Naive thymus-derived CD4-positive, alpha-beta T cell (primary cell): ENCODE measurements at regions of chr1 and their contacts with region 1.

Region 1: GRCh38 chr1:167121375-167122120 is 27.7 kb downstream of the STYXL2 start:
- DNase-seq: peak in 8 of 9 donors; percentile 11 to 59 (median 43)
- ATAC-seq: peak; percentile 75
- H3K4me3 ChIP-seq: peak overlapping the region; percentile 79
- H3K4me3 Mint-ChIP-seq: peak overlapping the region; percentile 81 to 93 (median 88)
- H3K27ac ChIP-seq: no peak overlapping the region
- H3K27ac Mint-ChIP-seq: peak overlapping the region in 8 of 9 donors; percentile 17 to 82 (median 74)
- H3K4me1 ChIP-seq: peaks cover 0 to 8% of the 10 kb centered on the region in 2 donors
- H3K4me1 Mint-ChIP-seq: peaks cover 4 to 10% (median 7%) of the 10 kb centered on the region in 7 donors
- H3K27me3 ChIP-seq: no peaks in the 10 kb centered on the region
- H3K27me3 Mint-ChIP-seq: peaks cover 0 to 12% (median 5%) of the 10 kb centered on the region in 5 donors

Region 2: GRCh38 chr1:166612886-166613285 is 508.7 kb before region 1 on chr1:
- CTCF ChIA-PET with region 1: no interaction called
- POLR2A ChIA-PET with region 1: no interaction called
- intact Hi-C with region 1: no loop called
- DNase-seq: no peak
- ATAC-seq: no peak
- H3K4me3 ChIP-seq: no peak overlapping the region
- H3K4me3 Mint-ChIP-seq: no peak overlapping the region
- H3K27ac ChIP-seq: no peak overlapping the region
- H3K27ac Mint-ChIP-seq: no peak overlapping the region
- H3K4me1 ChIP-seq: no peaks in the 10 kb centered on the region
- H3K4me1 Mint-ChIP-seq: no peaks in the 10 kb centered on the region
- H3K27me3 ChIP-seq: no peaks in the 10 kb centered on the region
- H3K27me3 Mint-ChIP-seq: peaks cover 0 to 14% (median 3%) of the 10 kb centered on the region in 5 donors

Region 3: DNA sequence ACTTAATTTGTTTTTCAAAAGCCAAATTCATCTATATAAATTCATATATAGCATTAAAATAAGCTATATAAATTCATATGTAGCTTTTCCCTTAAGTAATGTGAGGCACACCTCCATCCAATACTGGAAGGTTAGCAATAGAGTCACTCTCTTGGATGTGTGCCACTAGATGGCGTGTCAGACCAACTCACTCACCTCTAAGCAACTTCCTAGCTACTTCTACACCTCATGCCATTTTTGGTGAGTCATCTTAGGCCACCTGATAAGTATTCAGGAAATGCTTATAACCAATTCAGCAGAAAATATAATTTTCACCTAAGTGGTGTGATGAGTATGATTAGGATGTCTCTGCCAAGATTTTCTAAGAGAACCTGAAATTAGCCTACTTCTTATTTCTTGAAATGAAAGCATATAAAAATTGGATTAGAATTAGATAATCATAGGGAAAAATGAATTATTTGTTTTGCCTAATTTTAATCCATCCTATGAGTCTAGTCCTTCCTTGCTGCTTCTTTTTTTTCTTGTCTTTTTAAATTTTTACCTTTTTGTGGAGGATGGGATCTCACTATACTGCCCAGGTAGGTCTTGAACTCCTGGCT is 211.1 kb before region 1 on chr1:
- CTCF ChIA-PET with region 1: interaction called, 20 read pairs
- POLR2A ChIA-PET with region 1: no interaction called
- intact Hi-C with region 1: loop called (anchors 1 to 5 kb)
- DNase-seq: peak; percentile 21 to 80 (median 74)
- ATAC-seq: peak; percentile 99
- H3K4me3 ChIP-seq: no peak overlapping the region
- H3K4me3 Mint-ChIP-seq: no peak overlapping the region
- H3K27ac ChIP-seq: no peak overlapping the region
- H3K27ac Mint-ChIP-seq: peak overlapping the region in 1 of 9 donors; percentile 12
- H3K4me1 ChIP-seq: no peaks in the 10 kb centered on the region
- H3K4me1 Mint-ChIP-seq: peaks cover 0 to 31% (median 4%) of the 10 kb centered on the region in 7 donors
- H3K27me3 ChIP-seq: no peaks in the 10 kb centered on the region
- H3K27me3 Mint-ChIP-seq: peaks cover 0 to 6% (median 0%) of the 10 kb centered on the region in 5 donors

Region 4: DNA sequence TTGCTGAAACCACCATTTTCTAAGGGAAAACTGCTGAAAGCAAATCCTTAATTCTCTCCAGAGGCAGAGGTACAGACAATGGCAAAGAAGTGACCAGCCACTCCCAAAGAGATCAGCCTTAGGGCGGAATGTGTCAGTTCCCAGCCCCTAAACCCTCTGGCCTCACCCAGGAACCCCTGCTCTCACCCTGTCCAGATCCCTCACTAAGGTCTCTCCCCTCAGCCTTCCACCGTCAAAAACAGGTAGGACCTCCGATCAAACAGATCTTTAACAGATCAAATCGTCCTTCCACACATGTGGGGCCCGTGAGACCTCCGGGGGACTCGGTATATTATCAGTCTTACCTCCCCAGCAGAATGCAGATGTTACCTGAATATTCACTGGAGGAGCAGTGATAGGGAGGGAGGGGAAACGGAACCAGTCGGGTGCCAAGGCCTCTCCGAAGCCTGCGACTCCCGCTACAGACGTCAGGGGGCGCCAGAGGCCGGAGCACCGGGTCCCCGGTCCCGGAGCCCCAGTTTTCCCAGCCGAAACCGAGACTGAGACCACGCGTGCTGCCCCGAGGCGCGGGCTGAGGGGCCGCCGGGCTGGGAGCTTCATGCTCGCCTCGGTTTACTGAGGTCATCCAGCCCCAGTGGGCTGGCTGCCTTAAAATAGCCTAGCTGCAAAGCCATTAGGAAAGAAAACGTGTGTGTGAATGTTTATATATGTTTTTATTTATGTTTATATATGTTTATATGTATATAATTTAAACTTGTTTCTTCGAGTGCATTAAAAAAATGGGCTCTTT is 55.0 kb before region 1 on chr1:
- CTCF ChIA-PET with region 1: interaction called, 67 read pairs
- POLR2A ChIA-PET with region 1: interaction called, 5 read pairs
- intact Hi-C with region 1: loop called (anchors 1 kb)
- DNase-seq: peak; percentile 59 to 90 (median 78)
- ATAC-seq: peak; percentile 95
- H3K4me3 ChIP-seq: no peak overlapping the region
- H3K4me3 Mint-ChIP-seq: peak overlapping the region in 4 of 10 donors; percentile 15 to 54 (median 37)
- H3K27ac ChIP-seq: no peak overlapping the region
- H3K27ac Mint-ChIP-seq: peak overlapping the region in 1 of 9 donors; percentile 58
- H3K4me1 ChIP-seq: no peaks in the 10 kb centered on the region
- H3K4me1 Mint-ChIP-seq: peaks cover 0 to 9% (median 5%) of the 10 kb centered on the region in 7 donors
- H3K27me3 ChIP-seq: no peaks in the 10 kb centered on the region
- H3K27me3 Mint-ChIP-seq: no peaks in the 10 kb centered on the region

Region 5: GRCh38 chr1:167105271-167106118 is 16.1 kb before region 1 on chr1:
- CTCF ChIA-PET with region 1: interaction called, 8 read pairs
- POLR2A ChIA-PET with region 1: interaction called, 3 read pairs
- intact Hi-C with region 1: loop called in 1 of 2 experiments (anchors 2 kb)
- DNase-seq: no peak
- ATAC-seq: no peak
- H3K4me3 ChIP-seq: no peak overlapping the region
- H3K4me3 Mint-ChIP-seq: peak overlapping the region in 7 of 10 donors; percentile 1 to 58 (median 13)
- H3K27ac ChIP-seq: no peak overlapping the region
- H3K27ac Mint-ChIP-seq: peak overlapping the region in 8 of 9 donors; percentile 23 to 87 (median 62)
- H3K4me1 ChIP-seq: peaks cover 5 to 29% of the 10 kb centered on the region in 2 donors
- H3K4me1 Mint-ChIP-seq: peaks cover 40 to 60% (median 56%) of the 10 kb centered on the region in 7 donors
- H3K27me3 ChIP-seq: no peaks in the 10 kb centered on the region
- H3K27me3 Mint-ChIP-seq: peaks cover 0 to 5% (median 0%) of the 10 kb centered on the region in 5 donors

Region 6: GRCh38 chr1:167533851-167534300 is 412.3 kb after region 1 on chr1:
- CTCF ChIA-PET with region 1: interaction called, 7 read pairs
- POLR2A ChIA-PET with region 1: no interaction called
- intact Hi-C with region 1: loop called in 1 of 2 experiments (anchors 5 kb)
- DNase-seq: peak in 8 of 9 donors; percentile 50 to 72 (median 58)
- ATAC-seq: peak; percentile 87
- H3K4me3 ChIP-seq: no peak overlapping the region
- H3K4me3 Mint-ChIP-seq: no peak overlapping the region
- H3K27ac ChIP-seq: no peak overlapping the region
- H3K27ac Mint-ChIP-seq: peak overlapping the region in 1 of 9 donors; percentile 30
- H3K4me1 ChIP-seq: no peaks in the 10 kb centered on the region
- H3K4me1 Mint-ChIP-seq: peaks cover 0 to 11% (median 2%) of the 10 kb centered on the region in 7 donors
- H3K27me3 ChIP-seq: no peaks in the 10 kb centered on the region
- H3K27me3 Mint-ChIP-seq: peaks cover 0 to 3% (median 0%) of the 10 kb centered on the region in 5 donors